Transverse colon (tissue), 4 donors: ENCODE measurements at regions of chr13 and their contacts with region 1.

Region 1: DNA sequence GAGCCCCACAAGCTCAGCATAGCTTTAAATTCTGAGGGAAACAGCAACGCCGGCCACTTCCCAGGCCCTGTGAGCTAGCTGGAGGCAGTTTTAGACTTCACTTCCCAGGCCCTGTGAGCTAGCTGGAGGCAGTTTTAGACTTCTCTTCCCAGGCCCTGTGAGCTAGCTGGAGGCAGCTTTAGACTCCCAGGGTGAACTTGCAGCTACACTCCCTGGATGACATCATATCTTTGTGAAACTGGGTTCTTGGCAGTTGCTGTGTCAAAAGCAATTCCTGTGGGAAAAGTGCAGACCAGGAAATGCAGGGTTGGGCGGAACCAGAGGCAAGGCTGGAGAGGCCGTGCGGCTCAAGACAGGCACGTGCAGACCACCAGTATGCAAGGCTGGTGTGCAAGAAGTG is 12.7 kb downstream of the SOX1 start:
- DNase-seq: no peak
- H3K4me3 ChIP-seq: no peak overlapping the region
- H3K27ac ChIP-seq: no peak overlapping the region
- H3K4me1 ChIP-seq: no peaks in the 10 kb centered on the region
- H3K27me3 ChIP-seq: peaks cover 64% of the 10 kb centered on the region
- CTCF ChIP-seq: no peak
- EP300 ChIP-seq: no peak
- POLR2A ChIP-seq: no peak

Region 2: GRCh38 chr13:112443995-112444860 is 364.5 kb after region 1 on chr13:
- in situ Hi-C with region 1: loop called in 2 of 4 experiments (anchors 25 kb)
- intact Hi-C with region 1: no loop called
- DNase-seq: peak; percentile 71
- H3K4me3 ChIP-seq: no peak overlapping the region
- H3K27ac ChIP-seq: no peak overlapping the region
- H3K4me1 ChIP-seq: no peaks in the 10 kb centered on the region
- H3K27me3 ChIP-seq: peaks cover 48% of the 10 kb centered on the region
- CTCF ChIP-seq: peak; percentile 72 to 88 (median 84)
- EP300 ChIP-seq: no peak
- POLR2A ChIP-seq: no peak